ENCODE measurements at regions of chr17 and their contacts with region 1.

Region 1: DNA sequence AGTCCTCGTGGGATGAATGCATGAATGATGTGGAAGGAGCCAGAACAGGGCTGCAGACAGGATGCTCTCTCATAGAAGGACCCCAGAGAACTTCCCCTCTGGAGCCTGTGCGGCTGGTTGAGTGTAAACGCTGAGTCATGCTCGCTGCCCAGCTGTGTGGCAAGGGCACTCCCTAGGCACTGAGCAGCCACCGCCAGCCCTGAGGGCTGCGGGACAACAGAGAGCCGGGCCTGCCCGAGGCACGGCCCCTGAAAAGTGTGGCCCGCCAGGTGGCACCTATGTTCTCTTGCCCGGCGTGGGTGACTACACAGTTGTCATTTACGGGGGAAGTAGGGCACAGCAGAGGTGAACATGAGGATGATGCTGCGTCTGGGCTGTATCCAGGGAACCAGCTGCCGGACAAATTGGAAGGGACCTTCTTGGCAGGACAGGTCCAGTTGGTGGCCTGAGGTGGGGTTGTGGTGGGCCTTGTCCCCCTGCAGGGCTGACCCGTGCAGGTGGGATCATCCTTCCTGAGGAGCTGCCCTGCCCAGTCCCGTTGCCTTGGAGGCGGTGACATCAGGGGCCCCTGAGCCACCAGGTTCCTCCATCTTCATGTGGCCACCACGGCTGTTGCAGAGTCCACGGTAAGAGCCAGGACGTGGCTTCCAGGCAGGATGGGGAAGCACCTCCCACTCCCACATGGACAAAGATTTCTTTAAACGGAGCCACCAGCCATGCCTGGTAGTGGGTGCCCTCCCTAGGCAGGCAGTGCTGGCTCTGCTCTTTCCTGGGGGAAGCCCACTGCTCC is 94.8 kb upstream of the CBX4 start:
- DNase-seq: peak; percentile 48
- ATAC-seq: peak; percentile 25
- H3K4me3 Mint-ChIP-seq: peak overlapping the region; percentile 64
- H3K27ac Mint-ChIP-seq: peak overlapping the region; percentile 92
- H3K4me1 Mint-ChIP-seq: peaks cover 89% of the 10 kb centered on the region
- H3K27me3 Mint-ChIP-seq: peaks cover 3% of the 10 kb centered on the region
- CTCF ChIP-seq: no peak

Region 2: DNA sequence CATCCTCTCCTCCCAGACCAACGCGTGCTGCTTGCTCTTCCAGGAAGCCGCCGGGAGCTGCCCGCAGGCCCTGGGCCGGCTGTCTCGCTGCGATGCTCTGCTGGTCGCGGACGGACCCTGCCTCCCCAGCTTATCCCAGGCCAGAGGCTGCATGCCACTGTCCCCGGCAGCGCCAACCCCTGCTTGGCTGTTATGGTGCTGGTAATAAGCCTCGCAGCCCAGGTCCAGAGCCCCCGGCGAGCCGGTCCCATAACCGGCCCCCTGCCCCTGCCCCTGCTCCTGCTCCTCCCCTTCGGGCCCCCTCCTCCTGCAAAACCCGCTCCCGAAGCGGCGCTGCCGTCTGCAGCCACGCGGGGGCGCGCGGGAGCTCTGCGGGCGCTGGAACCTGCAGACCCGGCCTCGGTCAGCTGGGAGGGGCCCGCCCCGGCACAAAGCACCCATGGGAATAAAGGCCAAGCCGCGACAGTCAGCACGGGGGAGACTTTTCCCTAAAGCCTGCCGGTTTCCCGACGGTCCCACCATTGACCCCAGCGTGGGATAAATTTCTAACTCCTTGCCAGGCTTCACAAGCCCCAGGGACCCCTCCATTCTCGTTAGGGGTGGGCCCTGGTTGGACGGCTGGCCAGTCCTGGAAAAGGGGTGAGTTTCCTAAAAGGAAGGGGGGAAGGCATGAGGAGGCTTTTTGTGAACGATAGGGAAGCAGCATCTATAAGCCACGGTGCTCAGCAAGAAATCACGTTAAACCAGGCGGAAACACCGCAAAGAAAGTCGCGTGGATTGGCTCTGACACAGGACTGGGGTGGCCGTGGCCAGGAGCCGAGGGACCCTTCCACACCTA is 192.1 kb before region 1 on chr17:
- CTCF ChIA-PET with region 1: no interaction called
- POLR2A ChIA-PET with region 1: no interaction called
- intact Hi-C with region 1: loop called (anchors 5 kb)
- DNase-seq: peak; percentile 81
- ATAC-seq: peak; percentile 83
- H3K4me3 Mint-ChIP-seq: no peak overlapping the region
- H3K27ac Mint-ChIP-seq: no peak overlapping the region
- H3K4me1 Mint-ChIP-seq: peaks cover 15% of the 10 kb centered on the region
- H3K27me3 Mint-ChIP-seq: peaks cover 32% of the 10 kb centered on the region
- CTCF ChIP-seq: peak; percentile 58

Region 3: DNA sequence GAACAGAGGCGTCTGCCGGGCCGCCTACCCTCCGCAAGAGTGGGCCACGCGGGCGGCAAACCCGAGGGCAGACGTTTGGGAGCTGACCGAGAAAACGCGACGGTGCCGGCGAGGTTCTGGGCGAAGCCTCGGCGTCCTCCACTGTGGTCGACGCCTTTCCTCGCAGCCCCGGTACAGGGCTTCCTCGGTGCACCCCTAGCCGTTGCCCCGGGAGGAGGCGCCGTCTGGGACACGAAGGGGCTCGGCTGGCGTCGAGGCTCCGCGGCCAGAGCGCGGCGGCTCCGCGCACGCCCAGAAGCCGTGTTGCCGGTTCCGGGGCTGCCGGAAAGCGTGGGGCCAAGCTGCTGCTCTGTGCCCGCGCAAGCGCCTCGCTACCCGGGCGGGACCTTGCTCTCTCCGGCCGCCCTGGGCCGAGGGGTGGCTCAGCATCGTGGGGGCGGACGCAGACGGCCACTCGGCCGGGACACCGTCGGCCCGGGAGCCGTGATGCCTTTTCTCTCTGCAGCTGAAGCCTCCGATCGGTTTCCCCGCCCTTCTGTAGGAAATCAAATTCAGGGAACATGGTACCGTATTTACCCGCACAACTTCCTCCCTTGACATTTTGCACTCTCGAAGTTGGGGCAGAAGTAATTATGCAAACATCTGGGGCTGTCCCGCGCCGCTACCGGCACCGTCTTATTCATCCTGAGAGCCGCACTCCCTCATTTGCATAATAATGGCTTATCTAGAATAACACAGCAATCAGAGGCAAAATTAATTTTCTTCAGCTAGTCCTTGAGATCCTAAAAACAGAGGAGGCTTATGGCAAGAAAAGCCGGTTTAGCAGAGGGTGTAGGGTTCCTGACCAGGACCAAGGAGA is 129.8 kb before region 1 on chr17:
- CTCF ChIA-PET with region 1: interaction called, 7 read pairs
- POLR2A ChIA-PET with region 1: interaction called, 16 read pairs
- intact Hi-C with region 1: loop called (anchors 5 kb)
- DNase-seq: peak; percentile 65
- ATAC-seq: peak; percentile 87
- H3K4me3 Mint-ChIP-seq: peak overlapping the region; percentile 81
- H3K27ac Mint-ChIP-seq: peak overlapping the region; percentile 91
- H3K4me1 Mint-ChIP-seq: peaks cover 43% of the 10 kb centered on the region
- H3K27me3 Mint-ChIP-seq: peaks cover 61% of the 10 kb centered on the region
- CTCF ChIP-seq: no peak

Region 4: GRCh38 chr17:79844869-79845600 is 89.0 kb before region 1 on chr17:
- CTCF ChIA-PET with region 1: interaction called, 4 read pairs
- POLR2A ChIA-PET with region 1: interaction called, 38 read pairs
- intact Hi-C with region 1: no loop called
- DNase-seq: peak; percentile 72
- ATAC-seq: peak; percentile 72
- H3K4me3 Mint-ChIP-seq: peak overlapping the region; percentile 41
- H3K27ac Mint-ChIP-seq: no peak overlapping the region
- H3K4me1 Mint-ChIP-seq: peaks cover 37% of the 10 kb centered on the region
- H3K27me3 Mint-ChIP-seq: peaks cover 26% of the 10 kb centered on the region
- CTCF ChIP-seq: no peak

Region 5: GRCh38 chr17:79970576-79971068 is 36.6 kb after region 1 on chr17:
- CTCF ChIA-PET with region 1: interaction called, 15 read pairs
- POLR2A ChIA-PET with region 1: interaction called, 27 read pairs
- intact Hi-C with region 1: loop called (anchors 1 kb)
- DNase-seq: no peak
- ATAC-seq: peak; percentile 60
- H3K4me3 Mint-ChIP-seq: no peak overlapping the region
- H3K27ac Mint-ChIP-seq: no peak overlapping the region
- H3K4me1 Mint-ChIP-seq: peaks cover 29% of the 10 kb centered on the region
- H3K27me3 Mint-ChIP-seq: no peaks in the 10 kb centered on the region
- CTCF ChIP-seq: no peak

Region 6: DNA sequence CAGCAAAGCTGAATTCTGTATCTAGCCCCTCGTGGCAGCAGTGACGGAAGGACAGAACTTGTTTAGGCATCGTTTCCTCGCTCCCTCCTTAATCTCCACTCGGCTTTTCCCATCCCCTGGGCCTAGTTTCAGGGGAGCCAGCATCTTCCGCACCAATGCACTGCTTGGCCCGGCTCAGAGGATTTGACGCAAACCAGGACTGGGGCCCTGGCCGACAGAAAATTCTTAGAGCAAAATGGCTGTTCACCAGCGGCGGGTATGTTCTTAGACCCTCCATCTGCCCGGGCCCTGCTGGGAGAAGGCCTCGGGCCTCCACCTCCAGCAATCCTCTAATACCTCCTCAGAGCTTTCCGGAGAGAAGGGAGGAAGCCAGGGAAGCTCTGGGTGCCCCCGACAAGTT is 47.0 kb after region 1 on chr17:
- CTCF ChIA-PET with region 1: no interaction called
- POLR2A ChIA-PET with region 1: no interaction called
- intact Hi-C with region 1: no loop called
- DNase-seq: no peak
- ATAC-seq: no peak
- H3K4me3 Mint-ChIP-seq: no peak overlapping the region
- H3K27ac Mint-ChIP-seq: no peak overlapping the region
- H3K4me1 Mint-ChIP-seq: no peaks in the 10 kb centered on the region
- H3K27me3 Mint-ChIP-seq: peaks cover 3% of the 10 kb centered on the region
- CTCF ChIP-seq: no peak

Region 7: DNA sequence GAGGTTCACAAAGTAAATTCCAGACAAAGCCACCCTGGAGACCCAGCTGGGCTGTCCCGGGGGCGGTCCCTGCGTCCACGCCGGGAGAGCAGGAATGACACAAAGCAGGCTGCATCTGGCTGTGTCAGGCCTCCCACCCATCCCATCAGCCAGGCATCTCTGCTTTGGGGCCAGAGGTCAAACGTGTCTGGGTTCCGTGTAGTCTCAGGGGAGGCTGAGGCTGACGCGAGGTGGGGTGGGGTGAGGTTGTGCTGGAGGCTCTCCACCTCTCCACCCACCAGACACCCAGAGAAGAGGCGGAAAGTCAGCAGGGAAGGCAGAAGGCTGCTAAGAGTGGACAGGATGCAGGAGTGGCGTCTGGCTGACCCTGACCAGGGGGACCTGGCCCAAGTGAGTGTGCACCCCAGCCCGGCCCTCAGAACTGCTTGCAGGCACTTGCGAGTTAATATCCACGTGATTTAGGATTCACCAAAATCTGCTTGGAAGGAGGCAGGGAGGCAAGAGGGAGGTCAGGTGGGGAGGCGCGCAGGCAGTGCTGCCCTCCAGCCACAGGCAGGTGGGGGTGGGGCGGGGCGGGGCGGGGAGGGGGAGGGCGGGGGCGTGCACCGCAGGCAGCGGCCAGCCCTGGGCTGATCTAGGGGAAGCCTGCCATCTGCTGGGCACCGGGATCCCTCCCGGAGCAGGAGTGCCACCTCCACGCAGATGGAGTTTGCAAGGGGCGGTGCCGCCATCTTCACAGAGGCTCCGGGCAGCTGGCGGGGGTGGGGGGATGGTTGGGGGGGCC is 57.3 kb after region 1 on chr17:
- CTCF ChIA-PET with region 1: no interaction called
- POLR2A ChIA-PET with region 1: interaction called, 16 read pairs
- intact Hi-C with region 1: loop called (anchors 2 kb)
- DNase-seq: peak; percentile 67
- ATAC-seq: peak; percentile 91
- H3K4me3 Mint-ChIP-seq: peak overlapping the region; percentile 69
- H3K27ac Mint-ChIP-seq: no peak overlapping the region
- H3K4me1 Mint-ChIP-seq: peaks cover 35% of the 10 kb centered on the region
- H3K27me3 Mint-ChIP-seq: peaks cover 2% of the 10 kb centered on the region
- CTCF ChIP-seq: no peak

Region 8: DNA sequence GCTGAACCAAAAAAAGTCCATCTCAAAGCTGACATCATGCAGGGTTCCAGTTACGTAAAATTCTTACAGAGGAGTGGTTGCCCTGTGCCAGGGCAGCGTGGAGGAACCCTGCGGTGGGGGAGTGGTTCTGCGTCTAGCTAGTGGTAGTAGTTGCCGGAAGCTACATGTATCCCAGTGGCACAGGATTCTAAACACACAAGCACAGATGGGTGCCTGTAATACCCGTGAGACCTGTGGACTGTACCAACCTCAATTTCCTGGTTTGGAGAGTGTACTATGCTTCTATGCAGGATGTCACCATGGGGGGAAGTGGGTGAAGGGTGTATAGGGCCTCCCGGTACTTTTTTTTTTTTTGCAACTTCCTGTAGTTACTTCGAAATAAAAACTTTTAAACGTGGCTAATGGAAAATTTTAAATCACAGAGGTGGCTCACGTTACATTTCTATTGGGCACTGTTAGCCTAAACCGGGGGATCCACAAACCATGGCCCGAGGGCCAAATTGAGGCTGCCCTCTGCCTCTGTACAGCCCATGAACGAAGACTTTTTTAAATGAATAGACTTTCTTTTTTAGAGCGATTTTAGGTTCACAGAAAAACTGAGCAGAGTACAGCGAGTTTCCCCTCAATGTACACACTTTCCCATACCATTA is 63.1 kb after region 1 on chr17:
- CTCF ChIA-PET with region 1: no interaction called
- POLR2A ChIA-PET with region 1: interaction called, 16 read pairs
- intact Hi-C with region 1: loop called (anchors 2 kb)
- DNase-seq: peak; percentile 41
- ATAC-seq: peak; percentile 97
- H3K4me3 Mint-ChIP-seq: peak overlapping the region; percentile 68
- H3K27ac Mint-ChIP-seq: peak overlapping the region; percentile 93
- H3K4me1 Mint-ChIP-seq: peaks cover 46% of the 10 kb centered on the region
- H3K27me3 Mint-ChIP-seq: peaks cover 2% of the 10 kb centered on the region
- CTCF ChIP-seq: no peak

Region 9: DNA sequence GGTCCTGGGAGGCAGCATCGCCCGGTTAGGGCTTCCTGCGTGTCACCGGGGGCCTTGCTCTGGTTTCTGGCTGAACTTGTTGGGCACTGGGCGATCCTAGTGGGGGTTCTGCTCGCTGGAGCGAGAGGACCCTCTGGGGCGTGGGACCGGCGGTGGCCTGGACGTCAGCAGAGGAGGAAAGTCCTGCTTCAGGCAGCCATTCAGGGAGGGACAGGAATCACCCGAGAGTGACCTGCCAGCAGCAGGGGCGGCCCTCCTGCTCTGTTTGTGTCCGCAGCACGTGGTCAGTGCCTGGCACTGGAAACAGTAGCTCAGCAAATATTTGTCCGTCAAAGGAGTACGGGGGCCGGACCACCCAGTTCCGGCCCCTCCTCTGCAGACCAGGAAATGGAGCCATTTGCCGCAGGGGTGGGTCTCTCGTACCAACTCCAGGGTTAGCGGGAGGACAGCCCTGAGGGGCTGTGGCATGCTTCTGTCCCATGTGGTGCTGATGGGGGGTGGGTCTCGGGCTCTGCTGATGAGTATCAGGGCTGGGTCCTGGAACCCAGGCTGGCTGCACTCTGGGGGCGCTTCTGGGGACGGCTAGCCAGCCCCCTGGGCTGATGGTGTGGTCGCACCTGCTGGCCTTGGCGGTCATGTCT is 1149.2 kb after region 1 on chr17:
- CTCF ChIA-PET with region 1: no interaction called
- POLR2A ChIA-PET with region 1: no interaction called
- intact Hi-C with region 1: no loop called
- DNase-seq: no peak
- ATAC-seq: no peak
- H3K4me3 Mint-ChIP-seq: no peak overlapping the region
- H3K27ac Mint-ChIP-seq: no peak overlapping the region
- H3K4me1 Mint-ChIP-seq: no peaks in the 10 kb centered on the region
- H3K27me3 Mint-ChIP-seq: peaks cover 7% of the 10 kb centered on the region
- CTCF ChIP-seq: no peak